ENCODE measurements at regions of chr6 and their contacts with region 1.

Region 1: GRCh38 chr6:167141667-167142432 is 15.9 kb downstream of the GPR31 start:
- DNase-seq: peak; percentile 55
- H3K4me3 ChIP-seq: no peak overlapping the region
- H3K27ac ChIP-seq: no peak overlapping the region
- H3K4me1 ChIP-seq: peaks cover 5% of the 10 kb centered on the region
- H3K27me3 ChIP-seq: no peaks in the 10 kb centered on the region
- CTCF ChIP-seq: peak; percentile 82

Region 2: DNA sequence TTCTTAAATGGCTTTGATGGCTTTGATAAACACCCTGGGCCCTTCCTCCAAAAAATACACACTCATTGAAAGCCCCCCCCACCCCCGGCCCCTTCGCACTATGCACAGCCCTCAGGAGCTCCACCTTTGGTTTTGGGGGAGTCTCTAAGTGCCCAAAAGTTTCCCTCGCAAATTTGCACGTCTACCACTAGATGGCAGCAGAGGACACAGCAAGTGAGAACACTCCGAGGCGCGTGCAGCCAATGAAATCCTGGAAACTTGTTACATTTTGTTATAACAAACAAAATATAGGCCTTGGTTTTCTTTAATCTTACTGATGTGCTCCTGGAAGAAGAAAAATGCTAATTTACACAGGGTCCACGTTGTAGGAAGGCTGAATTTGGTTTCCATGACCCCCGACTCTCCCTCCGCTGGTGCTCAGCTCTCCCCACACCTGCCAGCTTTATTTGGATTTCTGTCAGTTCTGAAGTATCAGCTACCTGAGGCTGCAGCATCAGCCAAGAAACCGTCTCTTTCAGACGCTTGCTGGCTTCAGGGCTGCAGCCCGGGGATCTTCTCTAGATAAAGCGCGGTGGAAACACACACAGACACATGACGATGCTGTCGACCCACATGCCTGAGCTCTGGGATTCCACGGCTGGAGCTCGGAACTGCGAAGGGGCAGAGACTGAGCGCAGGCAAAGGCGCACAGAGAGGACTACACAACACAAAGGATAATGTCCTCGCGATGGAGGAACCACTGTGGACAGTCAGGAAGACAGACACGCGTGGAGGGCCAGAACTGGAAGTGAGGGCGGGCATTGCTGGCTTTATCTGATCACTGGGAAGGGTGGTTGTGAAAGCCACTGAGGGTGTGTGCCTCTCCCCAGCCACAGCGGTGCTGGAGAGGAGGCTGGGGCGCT is 366.4 kb before region 1 on chr6:
- intact Hi-C with region 1: loop called (anchors 5 kb)
- DNase-seq: peak; percentile 40
- H3K4me3 ChIP-seq: no peak overlapping the region
- H3K27ac ChIP-seq: no peak overlapping the region
- H3K4me1 ChIP-seq: no peaks in the 10 kb centered on the region
- H3K27me3 ChIP-seq: no peaks in the 10 kb centered on the region
- CTCF ChIP-seq: peak; percentile 73

Region 3: GRCh38 chr6:166925141-166925996 is 216.5 kb before region 1 on chr6:
- intact Hi-C with region 1: no loop called
- DNase-seq: no peak
- H3K4me3 ChIP-seq: no peak overlapping the region
- H3K27ac ChIP-seq: no peak overlapping the region
- H3K4me1 ChIP-seq: no peaks in the 10 kb centered on the region
- H3K27me3 ChIP-seq: no peaks in the 10 kb centered on the region
- CTCF ChIP-seq: no peak

Region 4: DNA sequence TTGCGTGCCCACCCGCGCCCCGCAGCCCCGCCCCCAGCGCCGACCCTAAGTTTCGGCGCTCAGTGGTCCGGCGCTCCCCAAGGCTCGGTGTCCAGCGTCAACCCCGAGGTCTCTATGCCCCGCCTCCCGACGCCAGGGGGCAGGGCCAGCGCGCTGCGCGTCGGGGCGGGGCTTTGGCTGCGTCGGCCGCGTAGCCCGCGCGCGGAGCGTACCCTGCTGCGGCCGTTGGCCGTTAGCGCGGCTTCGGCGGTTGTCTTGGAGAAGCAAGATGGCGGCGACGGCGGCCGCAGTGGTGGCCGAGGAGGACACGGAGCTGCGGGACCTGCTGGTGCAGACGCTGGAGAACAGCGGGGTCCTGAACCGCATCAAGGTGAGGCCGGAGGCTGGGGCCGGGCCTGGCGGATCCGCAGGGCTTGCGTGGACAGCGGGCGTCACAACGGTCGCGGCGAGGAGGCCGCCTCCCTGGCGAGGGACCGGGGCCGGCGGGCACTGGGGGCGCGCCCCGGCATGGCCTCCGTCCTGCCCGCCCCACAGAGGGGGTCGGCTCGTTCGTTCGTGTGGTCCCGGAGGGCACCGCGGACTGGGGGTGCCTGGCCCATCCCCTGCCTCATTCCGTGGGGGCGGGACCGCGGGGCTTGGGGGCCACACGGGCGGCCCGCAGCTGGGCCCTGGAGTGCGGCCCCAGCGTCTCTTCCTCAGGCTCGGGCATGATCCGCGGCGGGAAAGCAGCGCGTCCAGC is 142.5 kb before region 1 on chr6 and contains the start of gene CEP43:
- intact Hi-C with region 1: loop called (anchors 5 kb)
- DNase-seq: peak; percentile 93
- H3K4me3 ChIP-seq: peak within 1 kb of the TSS; percentile 98
- H3K27ac ChIP-seq: peak within 1 kb of the TSS; percentile 72
- H3K4me1 ChIP-seq: peaks cover 7% of the 10 kb centered on the region
- H3K27me3 ChIP-seq: no peaks in the 10 kb centered on the region
- CTCF ChIP-seq: no peak
- total RNA-seq, gene CEP43: 17.3 to 23.8 TPM

Region 5: GRCh38 chr6:167247814-167248595 is 106.2 kb after region 1 on chr6:
- intact Hi-C with region 1: no loop called
- DNase-seq: no peak
- H3K4me3 ChIP-seq: no peak overlapping the region
- H3K27ac ChIP-seq: no peak overlapping the region
- H3K4me1 ChIP-seq: no peaks in the 10 kb centered on the region
- H3K27me3 ChIP-seq: no peaks in the 10 kb centered on the region
- CTCF ChIP-seq: no peak